GM12878 (cell line): ENCODE measurements at regions of chr2 and their contacts with region 1.

Region 1: GRCh38 chr2:227862227-227862740 is 9.1 kb upstream of the DAW1 start:
- DNase-seq: no peak
- ATAC-seq: peak; percentile 63
- H3K4me3 ChIP-seq: no peak overlapping the region
- H3K27ac ChIP-seq: no peak overlapping the region
- H3K4me1 ChIP-seq: no peaks in the 10 kb centered on the region
- H3K27me3 ChIP-seq: no peaks in the 10 kb centered on the region; a peak in 1 of 4 replicates
- CTCF ChIP-seq: peak; percentile 55 to 70 (median 66)
- EP300 ChIP-seq: no peak
- POLR2A ChIP-seq: no peak
- RAD21 ChIP-seq: peak; percentile 86

Region 2: GRCh38 chr2:227545990-227546389 is 316.3 kb before region 1 on chr2:
- CTCF ChIA-PET with region 1: no interaction called
- POLR2A ChIA-PET with region 1: no interaction called
- RAD21 ChIA-PET with region 1: no interaction called
- SMC1A ChIA-PET with region 1: no interaction called
- in situ Hi-C with region 1: no loop called
- intact Hi-C with region 1: no loop called
- DNase-seq: no peak
- ATAC-seq: 0 out of 3 replicates have a peak, but pooled peaks have one; percentile 22
- H3K4me3 ChIP-seq: no peak overlapping the region
- H3K27ac ChIP-seq: no peak overlapping the region
- H3K4me1 ChIP-seq: no peaks in the 10 kb centered on the region
- H3K27me3 ChIP-seq: no peaks in the 10 kb centered on the region
- CTCF ChIP-seq: peak; percentile 2 to 43 (median 36); a peak in 2 of 6 replicates
- EP300 ChIP-seq: no peak
- POLR2A ChIP-seq: no peak
- RAD21 ChIP-seq: peak; percentile 37; the same call in 1 of the 2 replicates

Region 3: GRCh38 chr2:227661019-227661649 is 201.2 kb before region 1 on chr2:
- CTCF ChIA-PET with region 1: interaction called, 69 read pairs
- POLR2A ChIA-PET with region 1: no interaction called
- RAD21 ChIA-PET with region 1: interaction called, 48 read pairs
- SMC1A ChIA-PET with region 1: interaction called, 45 read pairs
- in situ Hi-C with region 1: no loop called
- intact Hi-C with region 1: loop called (anchors 2 kb)
- DNase-seq: no peak
- ATAC-seq: no peak
- H3K4me3 ChIP-seq: no peak overlapping the region
- H3K27ac ChIP-seq: no peak overlapping the region
- H3K4me1 ChIP-seq: no peaks in the 10 kb centered on the region
- H3K27me3 ChIP-seq: no peaks in the 10 kb centered on the region
- CTCF ChIP-seq: no peak
- EP300 ChIP-seq: no peak
- POLR2A ChIP-seq: no peak
- RAD21 ChIP-seq: no peak

Region 4: GRCh38 chr2:227796045-227796711 is 66.1 kb before region 1 on chr2:
- CTCF ChIA-PET with region 1: interaction called, 24 read pairs
- POLR2A ChIA-PET with region 1: no interaction called
- RAD21 ChIA-PET with region 1: interaction called, 4 read pairs
- SMC1A ChIA-PET with region 1: interaction called, 11 read pairs
- in situ Hi-C with region 1: no loop called
- intact Hi-C with region 1: no loop called
- DNase-seq: no peak
- ATAC-seq: no peak
- H3K4me3 ChIP-seq: no peak overlapping the region
- H3K27ac ChIP-seq: no peak overlapping the region
- H3K4me1 ChIP-seq: no peaks in the 10 kb centered on the region
- H3K27me3 ChIP-seq: no peaks in the 10 kb centered on the region
- CTCF ChIP-seq: no peak
- EP300 ChIP-seq: no peak
- POLR2A ChIP-seq: no peak
- RAD21 ChIP-seq: no peak

Region 5: GRCh38 chr2:227829337-227829736 is 32.9 kb before region 1 on chr2:
- CTCF ChIA-PET with region 1: interaction called, 18 read pairs
- POLR2A ChIA-PET with region 1: no interaction called
- RAD21 ChIA-PET with region 1: interaction called, 4 read pairs
- SMC1A ChIA-PET with region 1: interaction called, 7 read pairs
- in situ Hi-C with region 1: no loop called
- intact Hi-C with region 1: no loop called
- DNase-seq: no peak
- ATAC-seq: peak; percentile 91
- H3K4me3 ChIP-seq: no peak overlapping the region
- H3K27ac ChIP-seq: no peak overlapping the region
- H3K4me1 ChIP-seq: no peaks in the 10 kb centered on the region
- H3K27me3 ChIP-seq: no peaks in the 10 kb centered on the region
- CTCF ChIP-seq: no peak
- EP300 ChIP-seq: no peak
- POLR2A ChIP-seq: no peak
- RAD21 ChIP-seq: no peak

Region 6: DNA sequence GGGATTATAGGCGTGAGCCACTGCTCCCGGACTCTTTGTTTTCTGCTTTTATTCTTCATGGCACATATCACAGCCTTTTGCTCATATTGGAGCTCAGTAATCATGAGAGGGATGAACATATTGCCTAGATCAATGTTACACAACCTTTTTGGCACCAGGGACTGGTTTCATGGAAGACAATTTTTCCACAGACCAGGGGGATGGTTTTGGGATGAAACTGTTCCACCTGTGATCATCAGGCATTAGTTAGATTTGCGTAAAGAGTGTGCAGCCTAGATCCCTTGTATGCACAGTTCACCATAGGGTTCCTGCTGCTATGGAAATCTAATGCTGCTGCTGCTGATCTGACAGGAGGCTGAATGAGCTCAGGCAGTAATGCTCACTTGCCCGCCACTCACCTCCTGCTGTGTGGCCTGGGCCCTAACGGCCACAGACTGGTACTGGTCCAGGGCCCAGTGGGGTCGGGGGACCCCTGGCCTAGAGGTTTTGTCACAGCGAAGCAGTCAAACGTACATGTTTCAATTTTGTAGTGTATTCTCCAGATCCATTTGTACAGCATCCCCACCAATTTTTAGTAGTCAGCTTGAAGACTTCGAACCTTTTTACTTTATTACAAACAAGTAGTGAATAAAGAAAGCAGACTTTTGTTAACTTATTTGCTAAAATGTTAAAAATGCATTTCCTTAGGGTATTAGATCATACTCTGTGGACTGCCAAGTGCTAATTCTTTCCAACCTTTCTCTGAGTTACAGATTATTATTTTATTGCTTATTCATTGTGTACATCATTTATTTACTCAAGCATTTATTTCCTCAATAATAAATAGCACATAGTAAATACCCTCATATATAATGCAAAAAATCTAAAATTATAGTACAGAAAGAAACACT is 15.4 kb after region 1 on chr2:
- CTCF ChIA-PET with region 1: interaction called, 16 read pairs
- POLR2A ChIA-PET with region 1: no interaction called
- RAD21 ChIA-PET with region 1: interaction called, 3 read pairs
- SMC1A ChIA-PET with region 1: interaction called, 5 read pairs
- in situ Hi-C with region 1: no loop called
- intact Hi-C with region 1: no loop called
- DNase-seq: no peak
- ATAC-seq: no peak
- H3K4me3 ChIP-seq: no peak overlapping the region
- H3K27ac ChIP-seq: no peak overlapping the region
- H3K4me1 ChIP-seq: no peaks in the 10 kb centered on the region
- H3K27me3 ChIP-seq: no peaks in the 10 kb centered on the region; a peak in 1 of 4 replicates
- CTCF ChIP-seq: no peak
- EP300 ChIP-seq: no peak
- POLR2A ChIP-seq: no peak
- RAD21 ChIP-seq: no peak